CD14-positive monocyte (primary cell): ENCODE measurements at regions of chr3 and their contacts with region 1.

Region 1: GRCh38 chr3:46116596-46116995 is 89.3 kb upstream of the XCR1 start:
- DNase-seq: no peak
- H3K4me3 ChIP-seq: no peak overlapping the region
- H3K4me3 Mint-ChIP-seq: no peak overlapping the region
- H3K27ac ChIP-seq: no peak overlapping the region
- H3K27ac Mint-ChIP-seq: peak overlapping the region in 4 of 7 donors; percentile 8 to 54 (median 28)
- H3K4me1 ChIP-seq: peaks cover 55 to 62% of the 10 kb centered on the region in 2 donors
- H3K4me1 Mint-ChIP-seq: peaks cover 60% of the 10 kb centered on the region
- H3K27me3 ChIP-seq: no peaks in the 10 kb centered on the region
- H3K27me3 Mint-ChIP-seq: no peaks in the 10 kb centered on the region
- CTCF ChIP-seq: no peak

Region 2: DNA sequence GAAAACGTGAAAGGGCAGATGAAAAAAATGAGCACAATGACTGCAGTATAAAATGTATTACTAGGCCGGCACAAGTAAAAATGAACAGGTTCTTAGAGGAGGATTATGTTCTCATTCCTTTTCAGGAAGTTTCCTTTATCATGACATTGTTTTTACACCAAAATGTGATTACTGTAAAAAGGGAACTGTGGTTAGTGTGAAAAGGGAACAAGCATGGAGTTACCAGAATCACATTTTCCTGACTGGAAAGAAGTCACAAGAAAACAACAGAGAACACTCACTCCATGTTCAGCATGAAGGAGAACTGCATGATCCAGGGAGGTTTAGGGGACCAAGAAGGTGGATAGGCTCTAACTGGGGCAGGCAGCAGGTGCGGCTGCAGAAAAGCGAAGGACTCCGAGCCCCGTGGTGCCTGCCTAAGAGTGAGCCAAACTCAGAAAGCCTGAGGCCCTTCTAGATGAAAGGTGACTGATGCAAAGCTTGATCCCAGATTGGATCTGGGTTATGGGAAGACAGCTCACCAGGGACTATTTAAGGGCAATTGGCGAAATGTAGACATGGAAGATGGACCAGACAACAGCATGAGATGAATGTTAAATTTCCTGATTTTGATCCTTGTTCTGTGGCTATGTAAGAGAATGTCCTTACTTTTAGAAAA is 14.2 kb after region 1 on chr3:
- intact Hi-C with region 1: loop called in 1 of 2 experiments (anchors 2 kb)
- DNase-seq: peak; percentile 64 to 78 (median 73)
- H3K4me3 ChIP-seq: peak overlapping the region in 1 of 3 experiments; percentile 17
- H3K4me3 Mint-ChIP-seq: peak overlapping the region; percentile 17 to 59
- H3K27ac ChIP-seq: peak overlapping the region; percentile 85 to 89
- H3K27ac Mint-ChIP-seq: peak overlapping the region; percentile 91 to 98 (median 93)
- H3K4me1 ChIP-seq: peaks cover 74 to 79% of the 10 kb centered on the region in 2 donors
- H3K4me1 Mint-ChIP-seq: peaks cover 17% of the 10 kb centered on the region
- H3K27me3 ChIP-seq: no peaks in the 10 kb centered on the region
- H3K27me3 Mint-ChIP-seq: peaks cover 0 to 3% (median 0%) of the 10 kb centered on the region in 3 donors
- CTCF ChIP-seq: no peak